Activated CD4-positive, alpha-beta T cell treated with anti-CD3 and anti-CD28 coated beads, Interleukin-2, amount 10 ng/mL, durations not matched to agents 24 days and 14 days (primary cell): ENCODE measurements at regions of chr6 and their contacts with region 1.

Region 1: DNA sequence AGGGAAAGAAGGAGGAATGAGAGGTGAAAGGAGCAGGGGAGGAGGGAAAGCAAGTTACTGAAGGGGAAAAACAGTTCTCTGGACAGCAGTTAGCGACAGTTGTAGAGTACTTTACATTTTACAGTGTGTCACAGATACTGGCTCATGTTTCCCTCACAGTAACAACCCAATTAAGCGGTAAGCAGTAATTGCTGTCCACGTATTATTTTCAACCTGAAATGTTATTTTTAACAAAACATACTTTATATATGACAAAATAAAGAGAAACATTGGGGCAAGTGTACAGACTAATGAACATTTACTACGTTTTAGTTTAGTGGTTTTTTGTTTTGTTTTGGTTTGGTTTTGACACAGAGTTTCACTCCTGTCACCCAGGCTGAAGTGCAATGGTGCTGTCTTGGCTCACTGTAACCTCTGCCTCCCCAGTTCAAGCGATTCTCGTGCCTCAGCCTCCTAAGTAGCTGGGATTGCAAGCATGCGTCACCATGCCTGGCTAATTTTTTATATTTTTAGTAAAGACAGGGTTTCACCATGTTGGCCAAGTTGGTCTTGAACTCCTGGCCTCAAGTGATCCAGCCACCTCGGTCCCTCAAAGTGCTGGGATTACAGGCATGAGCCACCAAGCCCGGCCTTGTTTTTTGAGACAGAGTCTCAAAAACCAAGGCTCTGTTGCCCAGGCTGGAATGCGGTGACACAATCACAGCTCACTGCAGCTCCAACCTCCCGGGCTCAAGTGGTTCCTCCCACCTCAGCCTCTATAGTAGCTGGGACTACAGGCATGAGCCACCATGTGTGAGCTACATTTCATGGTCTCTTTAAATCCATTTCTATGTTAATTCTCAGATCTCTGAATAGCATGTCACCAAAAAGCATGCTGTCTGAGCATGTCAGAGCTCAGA is 22.6 kb upstream of the BTN3A2 start:
- DNase-seq: peak; percentile 71
- H3K4me3 Mint-ChIP-seq: peak overlapping the region; percentile 92
- H3K27ac Mint-ChIP-seq: peak overlapping the region; percentile 84
- H3K4me1 Mint-ChIP-seq: peaks cover 16% of the 10 kb centered on the region
- H3K27me3 Mint-ChIP-seq: peaks cover 5% of the 10 kb centered on the region

Region 2: GRCh38 chr6:25122001-25122400 is 1220.4 kb before region 1 on chr6:
- intact Hi-C with region 1: no loop called
- DNase-seq: peak; percentile 47
- H3K4me3 Mint-ChIP-seq: no peak overlapping the region
- H3K27ac Mint-ChIP-seq: no peak overlapping the region
- H3K4me1 Mint-ChIP-seq: peaks cover 65% of the 10 kb centered on the region
- H3K27me3 Mint-ChIP-seq: no peaks in the 10 kb centered on the region

Region 3: GRCh38 chr6:26204332-26205165 is 137.8 kb before region 1 on chr6:
- intact Hi-C with region 1: no loop called
- DNase-seq: peak; percentile 96
- H3K4me3 Mint-ChIP-seq: no peak overlapping the region
- H3K27ac Mint-ChIP-seq: no peak overlapping the region
- H3K4me1 Mint-ChIP-seq: peaks cover 31% of the 10 kb centered on the region
- H3K27me3 Mint-ChIP-seq: peaks cover 4% of the 10 kb centered on the region

Region 4: GRCh38 chr6:26383624-26384417 is 41.5 kb after region 1 on chr6:
- intact Hi-C with region 1: loop called (anchors 1 kb)
- DNase-seq: peak; percentile 73
- H3K4me3 Mint-ChIP-seq: peak overlapping the region; percentile 96
- H3K27ac Mint-ChIP-seq: peak overlapping the region; percentile 96
- H3K4me1 Mint-ChIP-seq: peaks cover 37% of the 10 kb centered on the region
- H3K27me3 Mint-ChIP-seq: no peaks in the 10 kb centered on the region